Ascending aorta (tissue), 2 donors: ENCODE measurements at regions of chr1 and their contacts with region 1.

Region 1: GRCh38 chr1:6602669-6603237 is at the start of gene KLHL21:
- DNase-seq: peak; percentile 77 to 96
- H3K4me3 ChIP-seq: peak within 1 kb of the TSS; percentile 92 to 95
- H3K27ac ChIP-seq: peak within 1 kb of the TSS; percentile 98 to 99
- H3K4me1 ChIP-seq: peaks cover 20 to 36% of the 10 kb centered on the region in 2 donors
- H3K27me3 ChIP-seq: no peaks in the 10 kb centered on the region
- CTCF ChIP-seq: no peak
- total RNA-seq, gene KLHL21: 147 TPM

Region 2: GRCh38 chr1:5983361-5984103 is 619.2 kb before region 1 on chr1:
- intact Hi-C with region 1: no loop called
- DNase-seq: no peak
- H3K4me3 ChIP-seq: no peak overlapping the region
- H3K27ac ChIP-seq: no peak overlapping the region
- H3K4me1 ChIP-seq: no peaks in the 10 kb centered on the region
- H3K27me3 ChIP-seq: no peaks in the 10 kb centered on the region
- CTCF ChIP-seq: no peak

Region 3: DNA sequence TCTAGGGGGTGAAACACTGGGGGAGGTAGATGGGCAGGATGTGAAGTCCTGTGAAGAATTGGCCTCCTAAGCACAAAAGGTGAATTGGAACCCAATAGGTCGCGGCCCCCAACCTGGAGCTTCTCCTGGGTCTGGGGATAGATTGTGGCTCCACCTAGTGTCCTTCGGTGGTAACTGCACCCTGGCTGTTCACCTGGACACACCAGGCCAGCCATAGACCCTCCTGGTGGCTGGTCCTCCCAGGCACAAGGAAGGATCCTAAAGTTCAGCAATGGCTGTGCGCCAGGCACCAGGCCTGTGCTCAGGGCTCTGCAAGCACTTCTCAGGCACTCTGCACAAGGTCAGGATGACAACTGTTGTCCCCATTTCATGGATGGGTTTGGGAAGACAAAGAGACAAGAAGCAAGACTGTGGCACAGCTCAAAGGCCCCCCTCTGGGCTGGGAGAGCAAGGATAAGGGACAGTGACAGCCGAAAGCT is 164.7 kb before region 1 on chr1:
- intact Hi-C with region 1: no loop called
- DNase-seq: peak in 1 of 2 donors; percentile 73
- H3K4me3 ChIP-seq: no peak overlapping the region
- H3K27ac ChIP-seq: no peak overlapping the region
- H3K4me1 ChIP-seq: no peaks in the 10 kb centered on the region
- H3K27me3 ChIP-seq: peaks cover 9% of the 10 kb centered on the region
- CTCF ChIP-seq: peak; percentile 83 to 98 (median 95)

Region 4: GRCh38 chr1:6570100-6570499 is 32.7 kb before region 1 on chr1:
- intact Hi-C with region 1: no loop called
- DNase-seq: no peak
- H3K4me3 ChIP-seq: no peak overlapping the region
- H3K27ac ChIP-seq: no peak overlapping the region
- H3K4me1 ChIP-seq: no peaks in the 10 kb centered on the region
- H3K27me3 ChIP-seq: no peaks in the 10 kb centered on the region
- CTCF ChIP-seq: no peak

Region 5: DNA sequence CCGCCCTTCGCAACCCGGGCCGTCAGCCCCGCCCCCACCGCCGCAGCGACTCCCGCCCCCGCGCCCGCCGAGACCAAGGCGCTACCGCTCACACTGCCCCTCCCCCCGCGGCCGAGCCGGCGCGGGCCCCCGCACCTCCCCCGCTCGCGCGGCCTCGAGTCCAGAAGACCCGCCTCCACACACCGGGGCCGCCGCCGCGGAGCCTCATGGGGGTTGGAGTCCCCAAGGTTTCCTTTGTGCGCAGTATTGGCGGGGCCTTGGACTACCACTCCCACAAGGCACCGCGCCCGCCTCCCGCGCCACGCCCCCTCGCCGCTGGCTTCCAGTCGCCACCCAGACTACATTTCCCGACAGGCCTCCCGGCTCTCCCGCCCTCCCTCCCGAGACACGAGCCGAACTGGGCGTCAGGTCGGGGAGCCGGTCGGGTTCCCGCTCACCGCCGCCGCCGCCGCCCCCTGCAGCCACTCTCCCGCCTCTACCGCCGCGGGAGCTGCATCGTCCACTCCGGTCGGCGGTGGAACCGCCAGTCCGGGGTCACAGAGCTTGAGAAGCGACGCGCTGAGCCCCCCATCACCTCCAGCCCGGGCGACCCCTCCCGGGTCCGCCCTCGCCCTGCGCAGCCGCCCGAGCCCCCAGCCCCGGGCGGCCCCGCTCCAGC is 10.7 kb after region 1 on chr1 and contains the start of gene PHF13:
- intact Hi-C with region 1: loop called (anchors 1 kb)
- DNase-seq: peak; percentile 98 to 100
- H3K4me3 ChIP-seq: peak within 1 kb of the TSS; percentile 94 to 100
- H3K27ac ChIP-seq: peak within 1 kb of the TSS; percentile 97 to 98
- H3K4me1 ChIP-seq: peaks cover 4 to 29% of the 10 kb centered on the region in 2 donors
- H3K27me3 ChIP-seq: no peaks in the 10 kb centered on the region
- CTCF ChIP-seq: no peak
- total RNA-seq, gene PHF13: 1.5 TPM

Region 6: DNA sequence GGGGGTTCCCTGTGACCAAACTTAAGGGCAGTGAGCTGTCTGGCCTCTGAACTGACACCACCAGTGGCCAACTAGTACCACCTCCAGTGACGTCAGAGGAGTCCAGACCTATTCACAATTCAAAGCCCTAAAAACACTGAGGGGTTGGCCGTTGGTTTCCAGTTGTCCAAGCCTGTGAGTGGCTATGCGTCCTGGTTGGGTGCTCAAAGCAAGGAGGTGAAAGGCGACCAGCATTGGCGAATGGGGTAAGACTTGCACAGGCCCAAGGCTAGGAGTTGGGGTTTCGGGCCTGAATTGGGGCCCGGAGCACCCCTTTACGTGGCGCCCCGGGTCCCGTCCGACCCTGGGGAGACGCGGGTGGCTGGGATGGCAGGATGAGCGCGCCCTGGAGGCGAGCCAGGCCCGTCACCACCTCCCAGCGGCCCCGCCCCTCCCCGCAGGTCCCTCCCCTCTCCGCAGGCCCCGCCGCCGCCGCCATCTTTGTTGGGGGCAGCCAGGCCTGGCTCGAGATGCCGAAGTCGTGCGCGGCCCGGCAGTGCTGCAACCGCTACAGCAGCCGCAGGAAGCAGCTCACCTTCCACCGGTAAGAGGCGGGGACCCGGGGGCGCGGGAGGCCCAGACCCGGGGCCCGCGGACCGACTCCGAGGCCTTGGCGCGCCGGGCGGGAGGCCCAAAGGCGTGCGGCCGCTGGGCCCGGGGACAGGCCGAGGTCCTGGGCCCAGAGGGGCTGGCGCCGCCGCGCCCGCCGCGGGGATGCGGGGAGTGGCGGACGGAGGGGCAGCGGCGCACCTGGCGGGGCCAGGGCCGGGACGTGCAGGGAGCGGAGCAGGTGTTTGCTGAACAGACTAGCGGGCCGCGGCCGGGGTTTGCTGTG is 22.2 kb after region 1 on chr1 and contains the start of gene THAP3:
- intact Hi-C with region 1: loop called (anchors 1 kb)
- DNase-seq: peak; percentile 37 to 91
- H3K4me3 ChIP-seq: peak within 1 kb of the TSS; percentile 87 to 88
- H3K27ac ChIP-seq: peak within 1 kb of the TSS; percentile 80 to 92
- H3K4me1 ChIP-seq: peaks cover 4 to 14% of the 10 kb centered on the region in 2 donors
- H3K27me3 ChIP-seq: no peaks in the 10 kb centered on the region
- CTCF ChIP-seq: no peak
- total RNA-seq, gene THAP3: 9.3 TPM

Region 7: DNA sequence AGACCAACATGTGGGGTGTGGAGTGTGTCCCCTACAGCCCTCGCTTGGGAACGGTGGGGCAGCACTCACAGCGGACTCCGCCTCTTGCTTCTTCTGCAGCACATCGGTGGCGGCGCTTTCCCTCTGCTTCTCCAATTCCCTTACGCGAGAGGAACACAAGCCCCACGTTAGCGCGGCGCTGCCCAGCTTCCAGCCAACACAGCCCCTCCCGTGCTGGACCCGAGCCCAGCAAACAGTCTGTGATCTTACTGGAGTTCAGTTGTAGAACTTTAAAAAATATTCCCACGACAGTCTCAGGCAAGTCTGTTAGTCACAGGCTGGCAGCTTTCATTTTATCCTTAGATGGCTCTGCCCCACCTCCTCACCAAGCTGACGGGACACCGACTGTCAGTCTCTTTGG is 35.5 kb after region 1 on chr1:
- intact Hi-C with region 1: loop called (anchors 1 kb)
- DNase-seq: peak; percentile 82 to 96
- H3K4me3 ChIP-seq: peak overlapping the region in 1 of 2 donors; percentile 44
- H3K27ac ChIP-seq: peak overlapping the region; percentile 80 to 94
- H3K4me1 ChIP-seq: peaks cover 2 to 13% of the 10 kb centered on the region in 2 donors
- H3K27me3 ChIP-seq: no peaks in the 10 kb centered on the region
- CTCF ChIP-seq: no peak

Region 8: GRCh38 chr1:6872573-6873261 is 270.0 kb after region 1 on chr1:
- intact Hi-C with region 1: no loop called
- DNase-seq: no peak
- H3K4me3 ChIP-seq: no peak overlapping the region
- H3K27ac ChIP-seq: no peak overlapping the region
- H3K4me1 ChIP-seq: peaks cover 11 to 36% of the 10 kb centered on the region in 2 donors
- H3K27me3 ChIP-seq: no peaks in the 10 kb centered on the region
- CTCF ChIP-seq: no peak